A549 (cell line): ENCODE measurements at regions of chr17 and their contacts with region 1.

Region 1: DNA sequence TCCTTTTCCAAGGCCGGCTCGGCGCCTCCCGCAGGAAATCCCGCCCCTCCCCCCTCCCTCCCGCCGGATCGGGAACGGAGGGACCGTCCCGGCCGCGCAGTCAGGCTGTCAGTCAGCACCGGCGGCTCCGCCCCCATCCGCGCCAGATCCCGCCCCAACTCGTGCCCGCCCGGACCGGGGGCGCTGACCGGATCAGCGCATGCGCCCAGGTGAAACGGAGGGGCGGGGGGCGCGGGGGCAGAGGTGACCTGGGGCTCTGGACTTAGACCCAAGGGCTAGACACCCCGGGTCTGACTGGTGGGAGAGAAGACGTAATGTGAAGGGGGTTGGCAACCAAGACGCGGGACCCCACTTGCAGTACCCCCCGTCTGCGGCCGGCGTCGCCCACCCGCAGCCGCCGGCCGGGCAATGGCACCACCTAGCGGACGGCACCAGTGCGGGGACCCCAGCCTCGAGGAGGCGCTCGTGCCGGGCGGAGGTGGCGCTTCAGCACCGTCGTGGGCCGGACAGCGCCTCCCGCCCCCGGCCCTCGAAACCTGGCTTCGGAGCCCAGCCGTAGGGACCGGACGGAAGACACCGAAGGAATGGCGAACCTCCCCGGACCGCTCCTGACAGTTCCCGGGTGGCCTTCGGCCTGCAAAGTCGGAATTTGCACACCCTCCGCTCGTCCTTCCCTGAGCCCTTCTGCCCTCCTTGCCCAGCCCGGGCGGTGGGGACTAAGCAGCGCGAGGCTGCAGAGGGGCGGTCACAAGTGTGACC is at the start of gene CASKIN2:
- DNase-seq: peak; percentile 94 to 99
- ATAC-seq: peak; percentile 69 to 85
- H3K4me3 ChIP-seq: peak within 1 kb of the TSS; percentile 89
- H3K27ac ChIP-seq: peak within 1 kb of the TSS; percentile 91 to 98
- H3K4me1 ChIP-seq: peaks cover 38% of the 10 kb centered on the region
- CTCF ChIP-seq: peak; percentile 100
- EP300 ChIP-seq: no peak
- POLR2A ChIP-seq: no peak; the same call in 1 of the 2 replicates
- RAD21 ChIP-seq: peak; percentile 81 to 95
- polyA plus RNA-seq, gene CASKIN2: 3.6 and 4.6 TPM in 2 replicates

Region 2: DNA sequence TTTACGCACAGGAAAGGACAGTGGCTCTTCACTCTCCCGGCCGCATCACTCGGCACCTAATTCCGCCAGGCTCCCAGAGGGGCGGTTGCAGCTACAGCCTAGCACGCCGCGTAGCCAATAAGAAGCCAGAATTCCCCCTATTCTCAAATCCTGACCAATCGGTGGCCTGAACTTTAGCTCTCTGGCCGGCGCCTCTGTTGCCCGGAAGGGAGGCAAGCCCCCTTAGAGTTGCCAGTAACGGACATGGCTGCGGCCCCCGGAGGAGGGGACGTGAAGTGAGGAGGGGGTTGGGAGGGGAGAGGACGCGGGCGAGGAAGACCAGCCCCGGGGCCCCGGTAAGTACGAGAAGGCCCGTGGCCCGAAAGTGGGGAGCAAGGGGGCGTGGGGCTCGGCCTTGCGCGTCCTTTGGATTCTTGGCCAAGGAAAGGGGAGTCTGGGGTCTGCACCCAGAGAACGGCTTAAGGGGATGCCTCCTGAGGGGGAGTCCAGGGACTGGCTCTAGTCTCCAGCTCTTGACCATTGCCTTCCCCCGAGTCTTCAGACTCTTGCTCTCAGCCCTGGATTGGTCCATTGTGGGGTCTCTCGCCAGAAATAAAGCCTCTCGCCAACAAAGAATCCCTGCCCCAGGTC is 59.1 kb before region 1 on chr17 and contains the start of gene TMEM94:
- CTCF ChIA-PET with region 1: interaction called, 4 read pairs
- POLR2A ChIA-PET with region 1: interaction called, 12 read pairs
- DNase-seq: peak; percentile 96 to 99
- ATAC-seq: peak; percentile 98 to 99
- H3K4me3 ChIP-seq: peak within 1 kb of the TSS; percentile 91
- H3K27ac ChIP-seq: peak within 1 kb of the TSS; percentile 92 to 95
- H3K4me1 ChIP-seq: peaks cover 23% of the 10 kb centered on the region
- CTCF ChIP-seq: no peak
- EP300 ChIP-seq: no peak
- POLR2A ChIP-seq: peak; percentile 55
- RAD21 ChIP-seq: no peak
- polyA plus RNA-seq, gene TMEM94: 30.5 and 42.7 TPM in 2 replicates

Region 3: DNA sequence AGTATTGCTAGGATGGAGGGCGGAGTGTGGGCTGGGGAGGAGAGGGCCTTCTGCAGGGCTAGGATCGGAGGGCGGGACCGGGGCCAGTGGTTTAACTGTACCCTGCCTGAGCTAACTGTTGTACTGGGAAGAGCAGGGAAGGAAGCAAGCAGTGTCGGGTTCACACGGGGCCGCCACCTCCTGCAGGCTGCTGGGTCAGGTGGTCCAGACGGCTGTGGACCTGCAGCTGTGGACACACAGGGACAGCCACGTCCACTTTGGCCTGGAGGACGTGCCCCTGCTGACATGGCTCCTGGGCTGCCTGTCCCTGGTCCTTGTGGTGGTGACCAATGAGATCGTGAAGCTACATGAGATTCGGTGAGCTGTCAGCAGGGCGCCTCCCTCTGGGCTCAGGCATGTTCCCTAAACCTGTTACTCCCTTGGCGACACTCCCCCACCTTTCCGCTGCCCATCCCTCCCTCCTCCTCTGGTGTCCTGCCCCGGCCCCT is 16.9 kb before region 1 on chr17:
- CTCF ChIA-PET with region 1: interaction called, 55 read pairs
- POLR2A ChIA-PET with region 1: interaction called, 3 read pairs
- DNase-seq: peak in 1 of 2 experiments; percentile 44
- ATAC-seq: peak; percentile 11 to 26; a peak in 2 of 6 replicates
- H3K4me3 ChIP-seq: no peak overlapping the region
- H3K27ac ChIP-seq: no peak overlapping the region
- H3K4me1 ChIP-seq: no peaks in the 10 kb centered on the region
- CTCF ChIP-seq: no peak; the same call in 2 of the 3 replicates
- EP300 ChIP-seq: no peak
- POLR2A ChIP-seq: no peak
- RAD21 ChIP-seq: no peak

Region 4: DNA sequence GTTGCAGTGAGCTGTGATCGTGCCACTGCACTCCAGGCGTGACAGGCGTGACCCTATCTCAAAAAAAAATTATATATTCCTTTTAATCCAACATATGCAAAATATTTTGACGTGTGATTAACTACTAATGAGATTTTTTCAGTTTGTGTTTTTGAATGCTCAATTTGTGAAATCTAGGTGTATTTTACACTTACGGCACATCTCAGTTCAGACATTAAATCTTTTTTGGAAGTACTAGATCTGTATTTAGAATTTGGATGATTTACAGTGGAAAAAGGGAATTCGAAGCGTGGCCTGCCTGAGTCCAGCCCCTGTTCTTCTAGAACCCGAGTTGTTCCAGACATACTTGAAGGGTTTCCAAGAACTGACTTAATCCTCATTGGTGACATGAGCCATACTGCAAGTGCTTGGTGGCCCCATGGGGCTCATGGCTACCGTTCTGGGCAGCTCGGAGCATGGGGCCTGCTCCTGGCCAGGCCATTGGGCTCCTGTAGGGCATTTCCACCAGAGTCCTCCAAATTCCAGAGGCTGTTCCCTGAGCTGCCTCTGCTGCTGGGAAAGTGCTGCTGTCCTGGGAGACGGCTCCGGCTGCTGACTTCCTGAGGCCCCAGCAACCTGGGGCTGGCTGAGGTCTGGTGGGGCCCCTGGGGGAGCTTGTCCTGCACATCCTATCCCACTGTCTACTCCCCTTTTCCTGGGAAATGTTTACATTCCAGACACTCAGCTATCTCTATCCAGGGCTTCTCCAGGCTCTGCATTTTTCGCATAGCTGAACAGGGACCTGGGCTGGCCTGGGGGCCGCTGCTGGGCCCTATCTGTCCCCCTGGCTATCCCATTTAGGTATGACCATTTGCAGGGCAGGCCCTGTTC is 37.0 kb after region 1 on chr17:
- CTCF ChIA-PET with region 1: interaction called, 14 read pairs
- POLR2A ChIA-PET with region 1: interaction called, 4 read pairs
- DNase-seq: peak in 1 of 2 experiments; percentile 36
- ATAC-seq: peak in 1 of 2 experiments; percentile 12; a peak in 3 of 6 replicates
- H3K4me3 ChIP-seq: no peak overlapping the region
- H3K27ac ChIP-seq: peak overlapping the region; percentile 54 to 83
- H3K4me1 ChIP-seq: peaks cover 70% of the 10 kb centered on the region
- CTCF ChIP-seq: no peak
- EP300 ChIP-seq: no peak
- POLR2A ChIP-seq: no peak
- RAD21 ChIP-seq: no peak

Region 5: GRCh38 chr17:76246080-76247066 is 730.7 kb after region 1 on chr17:
- CTCF ChIA-PET with region 1: no interaction called
- POLR2A ChIA-PET with region 1: no interaction called
- DNase-seq: no peak
- ATAC-seq: peak; percentile 34 to 62; a peak in 5 of 6 replicates
- H3K4me3 ChIP-seq: no peak overlapping the region
- H3K27ac ChIP-seq: no peak overlapping the region
- H3K4me1 ChIP-seq: peaks cover 6% of the 10 kb centered on the region
- CTCF ChIP-seq: no peak
- EP300 ChIP-seq: no peak
- POLR2A ChIP-seq: no peak
- RAD21 ChIP-seq: no peak